ENCODE measurements at regions of chr9 and their contacts with region 1.

Region 1: DNA sequence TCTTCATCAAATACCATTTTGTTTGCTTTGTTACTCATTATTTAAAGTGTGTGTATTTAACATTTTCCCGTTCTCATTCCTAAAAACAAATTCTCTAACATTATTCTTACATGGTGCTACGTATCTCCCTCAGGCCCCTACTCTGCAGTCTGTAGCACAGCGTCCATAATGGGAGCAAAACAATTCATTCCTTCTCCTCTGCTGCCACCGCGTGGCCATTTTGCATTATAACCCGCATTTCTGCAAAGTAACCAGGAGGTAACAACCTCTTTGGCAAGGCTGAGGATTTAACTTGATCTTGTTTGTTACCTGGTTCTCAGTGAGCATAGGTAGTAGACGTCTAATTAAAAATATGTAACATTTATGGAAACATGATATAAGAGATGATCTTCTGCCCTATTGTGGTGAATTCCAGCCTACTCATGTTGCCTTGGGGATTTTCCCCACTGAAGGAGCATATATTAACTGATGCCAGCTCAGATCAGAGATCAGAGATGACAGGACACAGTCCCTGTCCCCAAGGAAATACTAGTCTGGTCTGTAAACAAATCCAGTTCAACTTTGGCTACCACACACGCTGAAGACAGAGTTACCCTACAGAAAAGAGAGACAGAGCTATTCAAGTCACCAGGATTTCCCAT is 10.5 kb downstream of the OR1K1 start:
- ATAC-seq: peak; percentile 85 to 98 (median 94)
- H3K4me3 ChIP-seq: no peak overlapping the region
- H3K27ac ChIP-seq: no peak overlapping the region
- H3K4me1 ChIP-seq: no peaks in the 10 kb centered on the region

Region 2: GRCh38 chr9:122464633-122465567 is 345.5 kb before region 1 on chr9:
- in situ Hi-C with region 1: loop called in 5 of 9 experiments (anchors 5 to 25 kb)
- ATAC-seq: peak in 6 of 8 experiments; percentile 40 to 97 (median 71)
- H3K4me3 ChIP-seq: no peak overlapping the region
- H3K27ac ChIP-seq: no peak overlapping the region
- H3K4me1 ChIP-seq: no peaks in the 10 kb centered on the region

Region 3: GRCh38 chr9:123027517-123027916 is 217.1 kb after region 1 on chr9:
- in situ Hi-C with region 1: no loop called
- ATAC-seq: no peak
- H3K4me3 ChIP-seq: no peak overlapping the region
- H3K27ac ChIP-seq: no peak overlapping the region
- H3K4me1 ChIP-seq: no peaks in the 10 kb centered on the region